ENCODE measurements at regions of chr3 and their contacts with region 1.

Region 1: DNA sequence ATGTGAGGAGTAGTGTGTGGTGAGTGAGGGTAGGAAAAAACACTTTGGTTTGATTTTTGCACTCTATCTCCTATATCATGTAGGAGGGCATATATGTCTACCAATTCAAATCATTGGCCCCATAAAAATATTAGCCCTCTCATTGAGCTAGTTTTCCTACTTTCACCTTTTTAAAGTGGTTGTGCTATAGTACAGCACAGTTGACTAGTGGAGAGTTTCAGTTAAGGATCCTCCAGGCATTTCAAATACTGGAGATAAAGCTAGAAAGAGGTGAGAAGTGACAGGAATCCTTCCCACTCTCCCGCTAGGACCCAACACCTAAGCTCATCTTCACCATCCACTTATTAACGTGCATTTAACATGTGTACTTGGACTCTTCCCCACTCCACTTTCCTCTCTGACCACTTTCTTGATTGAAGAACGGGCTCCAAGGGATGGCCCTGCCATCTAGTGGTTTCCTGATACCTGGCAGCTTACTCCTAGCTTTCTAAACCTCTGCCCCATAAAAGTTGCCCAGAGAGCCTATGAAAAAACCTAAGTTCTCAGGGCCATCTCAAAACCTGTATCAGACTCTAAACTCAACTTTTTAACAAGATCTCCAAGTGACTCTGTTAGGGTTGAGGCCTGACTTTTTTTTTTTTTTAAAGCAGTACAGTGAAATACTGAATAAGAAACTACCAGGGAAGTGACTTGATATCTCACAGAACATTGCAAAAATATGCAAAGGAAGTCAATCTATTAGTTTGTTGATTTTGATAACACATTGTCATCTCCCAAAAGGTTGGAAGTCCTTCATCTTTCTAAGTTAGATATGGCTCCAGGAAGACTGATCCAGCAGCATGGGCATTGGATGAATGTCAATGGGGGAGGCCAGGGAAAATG is 17.9 kb downstream of the IL12A start:
- DNase-seq: peak; percentile 69
- H3K4me3 ChIP-seq: no peak overlapping the region
- H3K27ac ChIP-seq: no peak overlapping the region
- H3K4me1 ChIP-seq: peaks cover 0 to 7% (median 2%) of the 10 kb centered on the region in 4 donors
- H3K27me3 ChIP-seq: no peaks in the 10 kb centered on the region
- CTCF ChIP-seq: peak; percentile 50 to 81 (median 78)
- EP300 ChIP-seq: no peak
- POLR2A ChIP-seq: no peak

Region 2: GRCh38 chr3:159260049-159260662 is 746.4 kb before region 1 on chr3:
- intact Hi-C with region 1: loop called (anchors 5 kb)
- DNase-seq: no peak
- H3K4me3 ChIP-seq: no peak overlapping the region
- H3K27ac ChIP-seq: no peak overlapping the region
- H3K4me1 ChIP-seq: no peaks in the 10 kb centered on the region
- H3K27me3 ChIP-seq: no peaks in the 10 kb centered on the region
- CTCF ChIP-seq: peak; percentile 11 to 68 (median 54)
- EP300 ChIP-seq: no peak
- POLR2A ChIP-seq: no peak

Region 3: DNA sequence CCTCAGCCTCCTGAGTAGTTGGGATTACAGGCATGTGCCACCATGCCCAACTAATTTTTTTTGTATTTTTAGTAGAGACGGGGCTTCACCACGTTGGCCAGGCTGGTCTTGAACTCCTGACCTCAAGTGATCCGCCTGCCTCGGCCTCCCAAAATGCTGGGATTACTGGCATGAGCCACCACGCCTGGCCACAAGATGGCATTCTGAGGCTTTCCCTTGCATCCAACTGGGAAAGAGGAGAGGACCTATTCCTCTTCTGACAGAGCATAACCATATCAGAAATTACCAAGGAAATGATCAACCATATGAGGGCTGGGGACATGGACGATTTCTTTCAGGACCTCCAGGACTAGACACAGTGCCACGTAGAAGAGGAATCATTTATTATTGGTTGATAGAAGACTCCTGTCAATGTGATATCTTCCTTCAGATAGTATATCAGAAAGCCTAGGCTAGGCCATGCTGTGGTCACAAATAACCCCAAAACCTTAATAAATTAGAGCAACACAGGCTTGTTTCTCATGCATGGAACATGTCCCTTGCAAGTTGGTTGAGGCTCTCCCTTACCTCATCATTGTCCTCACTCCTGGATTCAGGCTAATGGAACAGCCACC is 390.2 kb before region 1 on chr3:
- intact Hi-C with region 1: loop called (anchors 5 kb)
- DNase-seq: no peak
- H3K4me3 ChIP-seq: no peak overlapping the region
- H3K27ac ChIP-seq: no peak overlapping the region
- H3K4me1 ChIP-seq: peaks cover 0 to 8% (median 3%) of the 10 kb centered on the region in 4 donors
- H3K27me3 ChIP-seq: no peaks in the 10 kb centered on the region
- CTCF ChIP-seq: peak; percentile 56 to 77 (median 64)
- EP300 ChIP-seq: no peak
- POLR2A ChIP-seq: no peak

Region 4: DNA sequence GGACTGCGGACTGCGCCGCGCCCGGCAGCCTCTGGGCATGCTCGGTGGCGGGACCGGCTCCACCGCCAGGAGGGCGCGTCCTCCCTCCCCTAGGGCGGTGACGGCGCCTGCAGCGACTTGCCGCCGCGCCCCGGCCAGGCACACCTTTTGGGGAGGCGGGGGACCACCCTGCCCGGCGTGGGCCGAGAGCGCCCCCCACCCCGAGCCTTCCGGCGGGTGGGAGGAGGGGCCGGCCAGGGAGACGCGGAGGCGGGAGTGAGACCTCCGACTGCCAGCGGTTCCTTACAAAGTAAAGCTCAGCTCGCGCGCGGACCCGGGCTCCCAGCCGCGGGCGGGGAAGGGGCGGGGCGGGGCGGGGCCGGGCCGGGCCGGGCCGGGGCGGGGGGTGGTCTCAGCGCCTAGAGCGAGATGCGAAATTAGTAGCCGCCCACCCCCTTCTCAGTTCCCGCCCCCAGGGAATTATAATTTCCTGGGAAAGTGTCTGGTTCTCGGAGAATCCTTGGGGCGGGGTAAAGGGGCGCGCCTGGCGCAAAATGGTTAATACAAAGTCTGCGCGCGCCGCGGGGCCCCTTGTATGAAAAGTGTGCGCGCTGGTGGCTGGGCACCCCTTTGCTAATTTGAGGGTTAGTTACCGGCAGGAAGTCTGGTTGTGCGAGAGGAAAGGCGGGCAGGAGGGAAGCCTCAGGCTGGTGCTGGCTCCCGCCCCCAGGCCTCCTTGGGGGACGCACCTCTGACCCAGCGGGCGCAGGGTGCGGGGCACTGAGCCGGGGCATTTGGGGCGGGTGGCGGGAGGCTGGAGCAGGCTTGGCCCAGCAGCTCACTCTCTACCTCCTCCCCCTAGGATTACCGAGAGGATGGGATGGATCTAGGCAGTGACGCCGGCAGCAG is 242.7 kb before region 1 on chr3:
- intact Hi-C with region 1: loop called (anchors 5 kb)
- DNase-seq: peak; percentile 90
- H3K4me3 ChIP-seq: peak overlapping the region; percentile 80 to 91 (median 86)
- H3K27ac ChIP-seq: peak overlapping the region; percentile 97 to 100 (median 100)
- H3K4me1 ChIP-seq: peaks cover 0 to 54% (median 49%) of the 10 kb centered on the region in 4 donors
- H3K27me3 ChIP-seq: no peaks in the 10 kb centered on the region
- CTCF ChIP-seq: peak; percentile 18 to 69 (median 44)
- EP300 ChIP-seq: no peak
- POLR2A ChIP-seq: peak; percentile 27 to 66

Region 5: GRCh38 chr3:159828542-159828943 is 178.0 kb before region 1 on chr3:
- intact Hi-C with region 1: loop called (anchors 1 kb)
- DNase-seq: no peak
- H3K4me3 ChIP-seq: no peak overlapping the region
- H3K27ac ChIP-seq: peak overlapping the region; percentile 34 to 70 (median 60)
- H3K4me1 ChIP-seq: peaks cover 0 to 70% (median 46%) of the 10 kb centered on the region in 4 donors
- H3K27me3 ChIP-seq: no peaks in the 10 kb centered on the region
- CTCF ChIP-seq: peak; percentile 47 to 52 (median 50)
- EP300 ChIP-seq: no peak
- POLR2A ChIP-seq: no peak

Region 6: GRCh38 chr3:159884661-159885402 is 121.7 kb before region 1 on chr3:
- intact Hi-C with region 1: loop called (anchors 2 kb)
- DNase-seq: no peak
- H3K4me3 ChIP-seq: no peak overlapping the region
- H3K27ac ChIP-seq: peak overlapping the region in 2 of 4 donors; percentile 56 to 67
- H3K4me1 ChIP-seq: peaks cover 0 to 75% (median 66%) of the 10 kb centered on the region in 4 donors
- H3K27me3 ChIP-seq: no peaks in the 10 kb centered on the region
- CTCF ChIP-seq: peak; percentile 24 to 49 (median 40)
- EP300 ChIP-seq: no peak
- POLR2A ChIP-seq: no peak

Region 7: GRCh38 chr3:160084998-160085397 is 78.5 kb after region 1 on chr3:
- intact Hi-C with region 1: no loop called
- DNase-seq: no peak
- H3K4me3 ChIP-seq: no peak overlapping the region
- H3K27ac ChIP-seq: no peak overlapping the region
- H3K4me1 ChIP-seq: no peaks in the 10 kb centered on the region
- H3K27me3 ChIP-seq: no peaks in the 10 kb centered on the region
- CTCF ChIP-seq: no peak
- EP300 ChIP-seq: no peak
- POLR2A ChIP-seq: no peak

Measured in sigmoid colon (tissue), 7 donors.